Endothelial cell of umbilical vein (primary cell): ENCODE measurements at regions of chr5 and their contacts with region 1.

Region 1: DNA sequence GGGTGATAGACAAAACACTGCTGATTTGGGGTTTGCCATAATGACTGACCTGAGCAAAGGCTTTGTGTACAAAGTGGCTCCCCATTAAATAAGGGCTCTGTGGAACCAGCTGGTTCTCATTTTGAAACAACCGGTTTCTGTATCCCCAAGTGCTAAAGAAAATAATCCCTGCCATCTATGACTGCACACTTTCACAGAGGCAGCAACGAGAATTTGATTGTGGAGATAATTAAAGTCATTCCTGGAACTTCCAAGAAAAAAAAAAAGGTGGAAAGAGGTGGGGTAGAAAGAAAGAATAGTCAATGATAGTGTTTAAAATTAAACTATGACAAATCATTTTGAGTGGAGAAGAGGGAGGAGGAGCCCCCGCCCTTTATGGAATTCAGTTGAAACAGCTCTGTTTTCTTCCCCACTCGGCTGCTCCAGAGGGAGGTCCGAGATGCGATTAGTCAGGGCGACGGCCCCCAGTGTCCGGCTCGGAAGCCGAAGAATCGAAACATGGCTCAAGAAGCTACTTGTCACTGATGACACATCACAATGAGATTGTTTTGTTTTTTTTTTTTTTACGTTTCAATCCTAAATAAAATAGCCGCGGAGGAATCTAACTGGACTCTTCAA is 38.4 kb downstream of the EBF1 start:
- DNase-seq: peak; percentile 45
- H3K4me3 ChIP-seq: no peak overlapping the region
- H3K27ac ChIP-seq: no peak overlapping the region
- H3K4me1 ChIP-seq: peaks cover 7% of the 10 kb centered on the region
- H3K27me3 ChIP-seq: peaks cover 0 to 2% of the 10 kb centered on the region in 2 experiments
- CTCF ChIP-seq: no peak
- POLR2A ChIP-seq: no peak

Region 2: GRCh38 chr5:159003037-159004030 is 58.0 kb before region 1 on chr5:
- CTCF ChIA-PET with region 1: no interaction called
- POLR2A ChIA-PET with region 1: no interaction called
- dilution Hi-C with region 1: no loop called
- intact Hi-C with region 1: loop called (anchors 5 kb)
- DNase-seq: peak; percentile 40
- H3K4me3 ChIP-seq: no peak overlapping the region
- H3K27ac ChIP-seq: no peak overlapping the region
- H3K4me1 ChIP-seq: peaks cover 14% of the 10 kb centered on the region
- H3K27me3 ChIP-seq: peaks cover 5 to 21% of the 10 kb centered on the region in 2 experiments
- CTCF ChIP-seq: no peak
- POLR2A ChIP-seq: no peak

Region 3: DNA sequence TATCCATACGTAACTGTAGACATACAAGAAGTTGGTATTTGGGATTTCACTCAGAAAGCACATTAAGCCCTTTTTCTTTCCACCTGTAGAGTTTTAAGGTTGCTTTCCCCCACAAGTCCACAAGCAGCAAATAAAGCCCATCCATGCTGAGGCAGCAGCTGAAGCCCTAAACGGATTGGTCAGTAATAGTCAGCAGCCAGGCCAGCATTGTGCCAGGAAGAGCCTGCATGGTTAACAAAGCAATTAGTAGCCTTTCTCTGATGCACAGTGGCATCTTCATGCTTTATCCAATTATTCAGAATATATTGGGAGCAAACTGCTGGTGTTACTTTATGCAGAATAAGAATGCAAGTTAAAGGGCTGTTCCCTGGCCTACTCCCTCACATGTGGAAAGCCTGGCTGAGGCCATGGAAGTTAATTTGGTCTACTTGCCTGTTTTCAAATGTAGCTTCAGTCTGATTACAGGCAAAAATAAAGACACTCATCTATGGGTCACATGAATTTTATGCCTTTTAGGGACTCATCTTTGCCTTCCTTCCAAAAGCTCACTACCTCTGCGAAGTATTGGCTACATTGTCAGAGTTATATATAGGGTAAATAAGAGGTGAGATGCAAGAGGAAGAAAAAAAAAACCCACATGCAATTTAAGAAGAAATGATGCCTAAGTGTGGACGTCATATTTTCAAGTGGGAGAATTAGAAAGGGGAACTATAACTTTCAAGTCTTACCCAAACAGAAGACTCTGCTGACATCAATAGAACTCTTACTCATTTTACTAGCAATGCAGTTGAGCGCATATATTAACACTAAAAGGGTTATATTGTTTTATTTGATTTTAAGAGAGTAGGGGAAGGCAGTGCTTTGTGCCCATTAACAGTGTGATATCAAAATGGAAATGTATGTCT is 22.5 kb after region 1 on chr5:
- CTCF ChIA-PET with region 1: no interaction called
- POLR2A ChIA-PET with region 1: no interaction called
- dilution Hi-C with region 1: no loop called
- intact Hi-C with region 1: no loop called
- DNase-seq: no peak
- H3K4me3 ChIP-seq: no peak overlapping the region
- H3K27ac ChIP-seq: no peak overlapping the region
- H3K4me1 ChIP-seq: no peaks in the 10 kb centered on the region
- H3K27me3 ChIP-seq: peaks cover 1 to 11% of the 10 kb centered on the region in 2 experiments
- CTCF ChIP-seq: no peak
- POLR2A ChIP-seq: no peak